ENCODE measurements at regions of chr3 and their contacts with region 1.

Region 1: GRCh38 chr3:100698736-100699135 is 10.6 kb upstream of the TFG start:
- DNase-seq: no peak
- ATAC-seq: no peak
- H3K4me3 ChIP-seq: no peak overlapping the region
- H3K4me3 Mint-ChIP-seq: no peak overlapping the region
- H3K27ac ChIP-seq: no peak overlapping the region
- H3K27ac Mint-ChIP-seq: no peak overlapping the region
- H3K4me1 ChIP-seq: no peaks in the 10 kb centered on the region
- H3K4me1 Mint-ChIP-seq: no peaks in the 10 kb centered on the region
- H3K27me3 ChIP-seq: peaks cover 0 to 11% of the 10 kb centered on the region in 2 experiments
- H3K27me3 Mint-ChIP-seq: peaks cover 51 to 53% of the 10 kb centered on the region in 2 donors

Region 2: GRCh38 chr3:100665230-100665629 is 33.5 kb before region 1 on chr3:
- CTCF ChIA-PET with region 1: no interaction called
- POLR2A ChIA-PET with region 1: no interaction called
- DNase-seq: peak in 9 of 35 experiments; percentile 2 to 31 (median 9)
- ATAC-seq: peak; percentile 73 to 79 (median 77)
- H3K4me3 ChIP-seq: peak overlapping the region in 1 of 2 donors; percentile 4
- H3K4me3 Mint-ChIP-seq: peak overlapping the region; percentile 49 to 69 (median 67)
- H3K27ac ChIP-seq: no peak overlapping the region
- H3K27ac Mint-ChIP-seq: peak overlapping the region; percentile 81 to 87
- H3K4me1 ChIP-seq: peaks cover 0 to 5% of the 10 kb centered on the region in 2 experiments
- H3K4me1 Mint-ChIP-seq: peaks cover 22 to 29% (median 23%) of the 10 kb centered on the region in 3 donors
- H3K27me3 ChIP-seq: no peaks in the 10 kb centered on the region
- H3K27me3 Mint-ChIP-seq: no peaks in the 10 kb centered on the region

Region 3: DNA sequence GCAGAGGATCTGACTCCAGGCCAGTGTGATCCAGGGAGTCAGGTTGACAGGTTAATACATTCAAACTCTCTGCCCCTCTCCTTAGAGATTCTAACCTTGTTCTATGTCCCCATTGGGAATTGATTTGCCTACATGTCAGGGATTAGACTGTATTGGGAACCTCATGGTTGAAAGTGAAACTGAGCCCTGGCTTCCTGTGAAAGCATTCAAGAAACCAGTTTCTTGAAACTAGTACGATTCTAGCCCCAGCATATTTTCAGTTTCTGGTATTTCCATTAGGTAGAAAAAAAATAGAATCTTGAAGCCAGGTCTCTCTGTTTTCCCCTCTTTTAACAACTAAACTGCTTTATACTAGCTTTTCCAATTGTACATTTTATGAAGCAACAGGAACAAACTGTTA is 434.9 kb after region 1 on chr3:
- CTCF ChIA-PET with region 1: no interaction called
- POLR2A ChIA-PET with region 1: interaction called in 1 of 2 experiments, 10 read pairs
- DNase-seq: peak in 1 of 35 experiments; percentile 2
- ATAC-seq: no peak
- H3K4me3 ChIP-seq: no peak overlapping the region
- H3K4me3 Mint-ChIP-seq: peak overlapping the region; percentile 19 to 52 (median 44)
- H3K27ac ChIP-seq: no peak overlapping the region
- H3K27ac Mint-ChIP-seq: peak overlapping the region; percentile 39 to 44
- H3K4me1 ChIP-seq: no peaks in the 10 kb centered on the region
- H3K4me1 Mint-ChIP-seq: peaks cover 13 to 18% (median 15%) of the 10 kb centered on the region in 3 donors
- H3K27me3 ChIP-seq: no peaks in the 10 kb centered on the region
- H3K27me3 Mint-ChIP-seq: no peaks in the 10 kb centered on the region